Activated CD4-positive, alpha-beta T cell treated with anti-CD3 and anti-CD28 coated beads for 36 hours (primary cell): ENCODE measurements at regions of chr13 and their contacts with region 1.

Region 1: DNA sequence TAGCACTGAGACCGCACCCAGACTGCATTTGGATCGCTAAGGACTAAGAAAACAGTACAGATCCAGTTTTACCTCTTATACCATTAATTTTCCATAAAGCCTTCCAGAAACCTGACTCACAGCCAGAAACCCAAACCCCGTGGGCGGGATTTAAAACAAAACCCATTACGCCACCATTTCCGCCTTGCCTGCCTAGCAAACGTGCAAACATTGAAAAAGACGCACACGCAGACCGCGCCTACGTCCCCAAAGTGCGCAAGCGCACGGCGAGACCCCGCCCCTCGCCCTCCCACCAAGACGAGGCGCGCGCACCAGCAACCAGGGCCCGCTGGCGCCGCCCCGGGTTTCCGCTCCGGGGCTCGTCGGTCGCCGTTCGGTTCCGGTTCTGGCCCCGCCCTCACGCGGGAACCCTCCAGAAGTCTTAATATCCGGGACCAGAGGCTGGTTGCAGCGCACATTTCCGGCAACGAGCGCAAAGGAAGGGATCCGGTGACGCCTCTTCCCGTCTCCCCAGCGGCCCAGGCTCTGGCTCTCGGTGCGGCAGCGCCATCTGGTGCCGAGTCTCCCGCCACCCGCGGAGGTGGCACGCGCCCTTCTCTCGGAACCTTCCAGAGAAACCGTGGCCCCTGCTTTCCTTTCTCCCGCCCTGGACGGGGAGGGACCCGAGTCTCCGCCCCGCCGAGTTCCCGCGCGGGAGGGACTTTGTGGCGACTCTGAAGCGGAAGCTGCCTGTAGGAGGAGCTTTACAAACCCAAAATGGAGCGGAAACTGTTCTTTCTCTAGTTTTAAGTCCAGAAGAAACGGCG is 256.9 kb upstream of the STARD13 start:
- DNase-seq: peak; percentile 99
- ATAC-seq: peak; percentile 86
- H3K4me3 Mint-ChIP-seq: peak overlapping the region; percentile 82
- H3K27ac Mint-ChIP-seq: peak overlapping the region; percentile 99
- H3K4me1 Mint-ChIP-seq: peaks cover 55% of the 10 kb centered on the region
- H3K27me3 Mint-ChIP-seq: no peaks in the 10 kb centered on the region

Region 2: GRCh38 chr13:32427852-32428580 is 1114.5 kb before region 1 on chr13 and contains the start of gene N4BP2L1:
- CTCF ChIA-PET with region 1: interaction called, 5 read pairs
- POLR2A ChIA-PET with region 1: no interaction called
- intact Hi-C with region 1: loop called (anchors 1 to 2 kb)
- DNase-seq: peak; percentile 94
- ATAC-seq: peak; percentile 77
- H3K4me3 Mint-ChIP-seq: peak within 1 kb of the TSS; percentile 86
- H3K27ac Mint-ChIP-seq: peak within 1 kb of the TSS; percentile 94
- H3K4me1 Mint-ChIP-seq: peaks cover 31% of the 10 kb centered on the region
- H3K27me3 Mint-ChIP-seq: no peaks in the 10 kb centered on the region
- total RNA-seq, gene N4BP2L1: 16.1 to 16.5 TPM

Region 3: GRCh38 chr13:32737111-32737571 is 805.3 kb before region 1 on chr13:
- CTCF ChIA-PET with region 1: no interaction called
- POLR2A ChIA-PET with region 1: no interaction called
- intact Hi-C with region 1: loop called in 1 of 2 experiments (anchors 1 kb)
- DNase-seq: no peak
- ATAC-seq: peak; percentile 73
- H3K4me3 Mint-ChIP-seq: peak overlapping the region; percentile 69
- H3K27ac Mint-ChIP-seq: peak overlapping the region; percentile 92
- H3K4me1 Mint-ChIP-seq: peaks cover 27% of the 10 kb centered on the region
- H3K27me3 Mint-ChIP-seq: no peaks in the 10 kb centered on the region

Region 4: GRCh38 chr13:33033051-33033812 is 509.3 kb before region 1 on chr13:
- CTCF ChIA-PET with region 1: interaction called, 3 read pairs
- POLR2A ChIA-PET with region 1: no interaction called
- intact Hi-C with region 1: loop called in 1 of 2 experiments (anchors 10 kb)
- DNase-seq: peak; percentile 42
- ATAC-seq: peak; percentile 85
- H3K4me3 Mint-ChIP-seq: peak overlapping the region; percentile 63
- H3K27ac Mint-ChIP-seq: peak overlapping the region; percentile 97
- H3K4me1 Mint-ChIP-seq: peaks cover 10% of the 10 kb centered on the region
- H3K27me3 Mint-ChIP-seq: peaks cover 6% of the 10 kb centered on the region

Region 5: DNA sequence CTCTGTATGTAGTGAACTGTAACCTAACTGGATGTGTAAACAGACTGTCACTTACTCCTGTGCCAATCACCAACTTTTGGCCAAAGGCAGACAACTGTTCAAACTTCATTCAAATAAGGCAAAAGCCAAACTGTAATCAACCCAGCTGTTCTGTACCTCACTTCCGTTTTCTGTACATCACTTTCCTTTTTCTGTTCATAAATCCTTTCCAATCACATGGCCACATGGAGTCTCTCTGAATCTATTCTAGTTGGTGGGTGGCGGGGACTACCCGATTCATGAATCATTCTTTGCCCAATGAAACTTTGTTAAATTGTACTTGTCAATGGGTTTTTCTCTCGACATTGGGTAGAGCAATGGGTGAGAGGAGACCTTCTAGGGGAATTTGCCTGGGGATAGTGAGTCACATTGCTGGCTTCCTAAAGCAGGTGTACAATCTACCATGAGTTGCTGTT is 97.2 kb after region 1 on chr13:
- CTCF ChIA-PET with region 1: no interaction called
- POLR2A ChIA-PET with region 1: no interaction called
- intact Hi-C with region 1: loop called (anchors 1 to 2 kb)
- DNase-seq: peak; percentile 79
- ATAC-seq: peak; percentile 89
- H3K4me3 Mint-ChIP-seq: no peak overlapping the region
- H3K27ac Mint-ChIP-seq: peak overlapping the region; percentile 88
- H3K4me1 Mint-ChIP-seq: peaks cover 50% of the 10 kb centered on the region
- H3K27me3 Mint-ChIP-seq: peaks cover under 1% of the 10 kb centered on the region

Region 6: DNA sequence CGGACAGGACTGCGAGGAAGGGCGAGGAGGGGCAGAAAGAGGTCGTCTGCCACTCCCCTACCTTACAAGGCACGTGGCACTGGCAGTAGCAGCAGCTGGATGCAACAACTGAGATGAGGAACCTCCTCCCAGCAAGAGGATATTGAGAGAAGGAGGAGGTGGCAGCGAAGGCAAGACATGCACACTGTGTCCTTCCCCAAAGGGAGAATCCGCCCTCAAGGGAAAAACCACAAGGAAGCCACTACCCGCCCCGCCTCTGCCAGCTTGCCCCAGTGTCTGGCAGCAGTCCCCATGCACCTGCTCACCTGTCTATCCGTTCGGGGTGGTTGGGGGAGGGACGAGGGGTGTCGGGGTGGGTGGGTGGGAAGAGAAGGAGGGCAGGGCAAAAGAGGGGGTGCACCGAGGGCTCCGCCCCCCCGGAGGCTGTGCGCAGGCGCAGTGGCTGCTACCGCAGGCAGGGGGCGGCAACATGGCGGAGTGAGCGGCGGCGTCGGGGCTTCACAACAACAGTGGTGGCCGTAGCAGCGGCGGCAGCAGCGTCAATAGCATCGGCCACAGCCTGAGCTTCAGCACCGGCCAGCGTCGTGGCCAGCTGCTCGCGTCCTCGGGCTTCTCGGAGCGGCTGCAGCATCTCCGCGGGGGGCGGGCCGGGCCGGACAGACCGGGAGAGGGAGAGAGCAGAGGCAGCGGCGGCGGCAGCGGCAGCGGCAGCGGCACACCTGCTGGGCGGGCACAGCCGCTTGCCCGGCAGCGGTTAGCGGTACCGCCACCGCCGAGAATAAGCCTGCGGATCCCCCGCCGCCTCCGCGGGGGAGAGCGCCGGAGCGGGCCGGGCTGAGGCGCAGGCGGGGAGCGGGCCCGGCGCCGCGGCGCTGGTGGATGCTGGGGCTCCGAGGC is 1399.6 kb after region 1 on chr13 and contains the start of gene NBEA:
- CTCF ChIA-PET with region 1: no interaction called
- POLR2A ChIA-PET with region 1: no interaction called
- intact Hi-C with region 1: loop called in 1 of 2 experiments (anchors 5 kb)
- DNase-seq: peak; percentile 86
- ATAC-seq: peak; percentile 64
- H3K4me3 Mint-ChIP-seq: peak within 1 kb of the TSS; percentile 83
- H3K27ac Mint-ChIP-seq: peak within 1 kb of the TSS; percentile 20
- H3K4me1 Mint-ChIP-seq: peaks cover 22% of the 10 kb centered on the region
- H3K27me3 Mint-ChIP-seq: peaks cover 33% of the 10 kb centered on the region
- total RNA-seq, gene NBEA: 0.39 to 0.44 TPM